Adrenal gland (tissue), 19 donors: ENCODE measurements at regions of chrX and their contacts with region 1.

Region 1: DNA sequence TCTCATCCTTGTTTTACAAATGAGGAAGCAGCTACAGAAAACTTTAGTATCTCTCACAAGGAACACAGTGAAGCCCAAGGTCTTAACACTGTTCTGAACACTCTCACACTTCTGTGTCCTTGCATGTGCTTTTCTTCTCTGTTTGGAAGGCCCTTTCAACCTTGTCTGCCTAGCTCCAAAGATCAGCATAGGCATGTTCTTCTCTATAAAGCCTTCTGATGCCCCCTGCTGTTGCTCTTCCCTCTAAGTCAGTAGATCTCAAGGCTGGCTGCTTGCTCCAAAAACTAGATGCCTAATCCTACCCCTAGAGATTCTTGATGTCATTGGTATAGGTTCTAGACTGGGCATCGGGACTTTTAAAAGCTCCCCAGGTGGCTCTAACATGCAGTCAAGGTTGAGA is 5.9 kb downstream of the APOO start:
- DNase-seq: peak; percentile 47 to 80 (median 63)
- H3K4me3 ChIP-seq: peak overlapping the region in 1 of 4 donors; percentile 41
- H3K27ac ChIP-seq: peak overlapping the region in 4 of 5 donors; percentile 34 to 83 (median 58)
- H3K4me1 ChIP-seq: peaks cover 5 to 38% of the 10 kb centered on the region in 2 donors
- H3K27me3 ChIP-seq: no peaks in the 10 kb centered on the region
- CTCF ChIP-seq: peak; percentile 19 to 76 (median 59)
- POLR2A ChIP-seq: no peak

Region 2: GRCh38 chrX:23694606-23695005 is 207.2 kb before region 1 on chrX:
- intact Hi-C with region 1: loop called (anchors 5 to 10 kb)
- DNase-seq: peak; percentile 43 to 77 (median 61)
- H3K4me3 ChIP-seq: no peak overlapping the region
- H3K27ac ChIP-seq: no peak overlapping the region
- H3K4me1 ChIP-seq: no peaks in the 10 kb centered on the region
- H3K27me3 ChIP-seq: no peaks in the 10 kb centered on the region
- CTCF ChIP-seq: peak in 5 of 6 experiments; percentile 20 to 58 (median 31)
- POLR2A ChIP-seq: no peak